Pancreas (tissue), 10 donors: ENCODE measurements at regions of chr14 and their contacts with region 1.

Region 1: DNA sequence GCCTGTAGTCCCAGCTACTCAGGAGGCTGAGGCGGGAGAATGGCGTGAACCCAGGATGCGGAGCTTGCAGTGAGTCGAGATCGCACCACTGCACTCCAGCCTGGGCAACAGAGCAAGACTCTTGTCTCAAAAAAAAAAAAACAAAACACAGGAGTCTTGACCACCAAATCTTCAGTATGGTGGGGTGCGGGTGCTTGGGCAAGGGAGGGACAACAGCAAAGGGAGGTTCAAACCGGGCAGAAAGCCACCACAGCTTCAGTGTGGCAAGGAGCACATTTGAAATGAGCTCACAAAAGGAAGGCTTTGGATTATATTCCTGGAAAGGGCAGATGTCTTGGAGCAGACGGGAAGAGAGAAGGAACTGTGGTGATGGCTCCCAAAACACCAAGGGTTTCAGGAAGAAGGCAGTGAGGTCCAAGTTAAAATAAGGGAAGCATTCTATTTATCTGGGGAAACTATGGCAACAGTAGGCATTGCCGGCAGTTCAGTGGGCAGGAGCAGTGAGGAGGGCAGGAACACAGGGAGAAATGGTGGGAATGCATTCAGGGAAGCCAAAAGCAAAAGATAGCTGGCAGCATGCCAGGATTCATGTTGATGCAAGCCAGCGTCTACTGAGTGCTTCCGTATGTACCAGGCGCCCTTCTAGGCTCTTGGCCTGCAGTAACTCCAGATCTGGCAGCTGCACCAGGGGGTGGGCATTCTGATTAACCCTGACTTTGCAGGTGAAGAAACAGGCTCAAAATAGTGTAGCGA is 51.0 kb upstream of the SRSF5 start:
- DNase-seq: peak in 3 of 6 donors; percentile 28 to 58 (median 48)
- ATAC-seq: peak in 3 of 4 donors; percentile 5 to 29 (median 28)
- H3K4me3 ChIP-seq: no peak overlapping the region
- H3K27ac ChIP-seq: peak overlapping the region in 2 of 4 donors; percentile 22 to 28
- H3K4me1 ChIP-seq: peaks cover 24 to 43% (median 24%) of the 10 kb centered on the region in 3 donors
- H3K27me3 ChIP-seq: no peaks in the 10 kb centered on the region
- CTCF ChIP-seq: no peak

Region 2: DNA sequence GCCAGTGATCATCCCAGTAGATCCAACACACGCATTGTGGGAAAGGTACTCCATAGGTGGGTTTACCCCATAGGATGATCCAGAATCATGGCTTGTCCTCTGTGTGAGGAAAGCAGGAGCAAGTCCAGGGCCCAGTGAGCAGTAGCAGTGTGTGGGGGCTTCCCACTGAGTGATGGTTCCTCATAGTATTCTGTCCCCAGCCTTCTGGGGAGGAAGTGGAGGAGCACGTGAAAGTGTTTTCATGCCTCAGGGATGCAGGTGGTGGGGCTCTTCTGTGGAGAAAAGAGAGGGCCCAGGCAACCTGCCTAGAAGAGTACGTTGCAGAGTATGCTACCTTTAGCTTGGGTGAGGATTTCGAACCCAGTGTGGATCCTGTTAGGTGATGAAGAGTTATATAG is 48.0 kb before region 1 on chr14:
- intact Hi-C with region 1: loop called in 1 of 3 experiments (anchors 10 kb)
- DNase-seq: no peak
- ATAC-seq: no peak
- H3K4me3 ChIP-seq: no peak overlapping the region
- H3K27ac ChIP-seq: peak overlapping the region in 1 of 4 donors; percentile 1
- H3K4me1 ChIP-seq: peaks cover 29 to 65% (median 45%) of the 10 kb centered on the region in 3 donors
- H3K27me3 ChIP-seq: no peaks in the 10 kb centered on the region
- CTCF ChIP-seq: no peak

Region 3: DNA sequence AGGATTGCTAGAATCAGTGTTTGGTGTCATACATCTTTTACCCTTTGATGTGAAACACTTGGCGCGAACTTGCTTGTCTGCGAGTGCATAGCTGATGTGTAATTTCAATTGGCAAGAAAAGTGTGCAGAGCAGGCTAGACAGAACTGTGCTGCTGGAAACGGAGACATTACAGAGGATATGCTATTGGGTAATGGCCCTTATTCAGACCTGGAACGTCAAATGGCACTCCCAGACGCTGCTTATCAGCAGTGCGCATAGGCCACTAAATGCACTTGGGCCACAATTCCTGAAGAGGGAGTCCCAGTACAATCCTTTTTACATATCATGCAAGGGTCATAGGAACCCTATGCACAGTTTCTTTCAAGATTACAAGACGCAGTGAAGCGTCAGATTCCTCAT is 96.8 kb after region 1 on chr14:
- intact Hi-C with region 1: no loop called
- DNase-seq: no peak
- ATAC-seq: no peak
- H3K4me3 ChIP-seq: no peak overlapping the region
- H3K27ac ChIP-seq: no peak overlapping the region
- H3K4me1 ChIP-seq: no peaks in the 10 kb centered on the region
- H3K27me3 ChIP-seq: no peaks in the 10 kb centered on the region
- CTCF ChIP-seq: no peak